Thyroid gland (tissue), 4 donors: ENCODE measurements at regions of chr4 and their contacts with region 1.

Region 1: GRCh38 chr4:25312496-25313200 is at the start of gene ZCCHC4:
- DNase-seq: peak; percentile 91 to 94
- H3K4me3 ChIP-seq: peak within 1 kb of the TSS; percentile 12 to 60 (median 48)
- H3K27ac ChIP-seq: peak within 1 kb of the TSS in 2 of 3 donors; percentile 47 to 50
- H3K4me1 ChIP-seq: peaks cover 5 to 7% of the 10 kb centered on the region in 2 donors
- H3K27me3 ChIP-seq: no peaks in the 10 kb centered on the region
- CTCF ChIP-seq: peak; percentile 80 to 100 (median 96)
- POLR2A ChIP-seq: peak in 1 of 2 donors; percentile 46
- total RNA-seq, gene ZCCHC4: 9.3 to 19.5 (median 13.4) TPM

Region 2: DNA sequence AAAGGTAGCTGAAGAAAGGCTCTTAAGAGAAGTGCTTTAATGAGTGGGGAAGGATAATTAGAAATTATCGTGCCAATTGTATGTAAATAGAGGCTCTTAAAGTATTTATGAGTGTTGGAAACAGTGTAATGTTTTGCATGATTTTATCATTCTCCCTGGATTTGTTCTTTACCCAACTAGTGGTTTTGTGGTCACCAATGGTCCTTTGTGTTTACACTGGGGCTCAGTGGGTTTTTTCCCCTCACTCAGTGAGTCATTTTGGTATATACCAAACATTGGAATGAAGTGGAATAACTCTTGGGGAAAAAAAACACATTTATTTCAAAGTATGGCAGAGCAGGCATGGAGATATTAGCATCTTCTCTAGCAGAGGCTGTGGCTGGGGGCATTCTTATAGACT is 261.1 kb before region 1 on chr4:
- intact Hi-C with region 1: no loop called
- DNase-seq: no peak
- H3K4me3 ChIP-seq: no peak overlapping the region
- H3K27ac ChIP-seq: no peak overlapping the region
- H3K4me1 ChIP-seq: no peaks in the 10 kb centered on the region
- H3K27me3 ChIP-seq: no peaks in the 10 kb centered on the region
- CTCF ChIP-seq: no peak
- POLR2A ChIP-seq: no peak

Region 3: GRCh38 chr4:25234390-25235370 is 78.0 kb before region 1 on chr4:
- intact Hi-C with region 1: loop called (anchors 5 kb)
- DNase-seq: peak; percentile 58 to 62
- H3K4me3 ChIP-seq: peak overlapping the region; percentile 70 to 89 (median 74)
- H3K27ac ChIP-seq: peak overlapping the region; percentile 92 to 98 (median 93)
- H3K4me1 ChIP-seq: peaks cover 14 to 26% of the 10 kb centered on the region in 2 donors
- H3K27me3 ChIP-seq: no peaks in the 10 kb centered on the region
- CTCF ChIP-seq: peak in 5 of 6 experiments; percentile 44 to 64 (median 55)
- POLR2A ChIP-seq: peak in 1 of 2 donors; percentile 61

Region 4: DNA sequence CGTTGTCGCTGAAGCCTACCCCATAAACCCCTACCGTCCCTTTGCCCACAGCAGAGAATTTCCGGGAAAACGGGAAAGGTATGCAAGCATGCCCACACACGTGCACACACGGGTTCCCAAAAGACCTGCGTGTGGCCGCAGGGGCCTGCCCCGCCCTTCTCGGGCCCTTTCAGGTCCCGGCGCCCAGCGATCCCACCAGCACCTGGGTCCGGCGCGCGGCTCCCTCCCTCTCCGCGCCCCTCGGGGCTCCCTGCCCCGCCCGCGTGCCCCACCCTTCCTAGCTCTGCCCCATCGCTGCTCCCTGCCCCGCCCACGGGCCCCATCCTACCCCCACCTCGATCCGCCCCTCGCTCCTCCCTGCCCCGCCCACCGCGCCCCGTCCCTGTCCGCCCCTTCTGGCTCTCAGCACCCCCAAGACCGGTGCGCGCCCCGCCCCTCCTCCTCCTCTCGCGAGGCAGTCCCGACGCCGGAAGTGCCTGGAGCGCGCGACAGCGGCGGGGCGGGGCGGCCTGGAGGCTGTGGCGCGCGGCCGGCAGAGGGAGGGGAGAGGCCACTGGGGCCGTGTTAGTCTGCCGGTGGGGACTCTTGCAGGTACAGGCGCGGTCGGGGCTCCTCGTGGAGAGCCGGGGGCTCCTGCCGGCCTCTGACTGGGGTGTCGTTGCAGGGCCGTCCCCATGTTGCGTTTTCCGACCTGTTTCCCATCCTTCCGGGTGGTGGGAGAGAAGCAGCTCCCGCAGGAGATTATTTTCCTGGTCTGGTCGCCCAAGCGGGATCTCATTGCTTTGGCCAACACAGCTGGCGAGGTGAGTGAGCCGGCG is 64.3 kb after region 1 on chr4 and contains the start of gene ANAPC4:
- intact Hi-C with region 1: loop called (anchors 10 kb)
- DNase-seq: peak; percentile 96
- H3K4me3 ChIP-seq: peak within 1 kb of the TSS; percentile 85 to 96 (median 91)
- H3K27ac ChIP-seq: peak within 1 kb of the TSS; percentile 21 to 69 (median 47)
- H3K4me1 ChIP-seq: peaks cover 7 to 13% of the 10 kb centered on the region in 2 donors
- H3K27me3 ChIP-seq: no peaks in the 10 kb centered on the region
- CTCF ChIP-seq: peak in 3 of 6 experiments; percentile 13 to 28 (median 21)
- POLR2A ChIP-seq: peak in 1 of 2 donors; percentile 77
- total RNA-seq, gene ANAPC4: 30.0 to 68.4 (median 32.6) TPM

Region 5: DNA sequence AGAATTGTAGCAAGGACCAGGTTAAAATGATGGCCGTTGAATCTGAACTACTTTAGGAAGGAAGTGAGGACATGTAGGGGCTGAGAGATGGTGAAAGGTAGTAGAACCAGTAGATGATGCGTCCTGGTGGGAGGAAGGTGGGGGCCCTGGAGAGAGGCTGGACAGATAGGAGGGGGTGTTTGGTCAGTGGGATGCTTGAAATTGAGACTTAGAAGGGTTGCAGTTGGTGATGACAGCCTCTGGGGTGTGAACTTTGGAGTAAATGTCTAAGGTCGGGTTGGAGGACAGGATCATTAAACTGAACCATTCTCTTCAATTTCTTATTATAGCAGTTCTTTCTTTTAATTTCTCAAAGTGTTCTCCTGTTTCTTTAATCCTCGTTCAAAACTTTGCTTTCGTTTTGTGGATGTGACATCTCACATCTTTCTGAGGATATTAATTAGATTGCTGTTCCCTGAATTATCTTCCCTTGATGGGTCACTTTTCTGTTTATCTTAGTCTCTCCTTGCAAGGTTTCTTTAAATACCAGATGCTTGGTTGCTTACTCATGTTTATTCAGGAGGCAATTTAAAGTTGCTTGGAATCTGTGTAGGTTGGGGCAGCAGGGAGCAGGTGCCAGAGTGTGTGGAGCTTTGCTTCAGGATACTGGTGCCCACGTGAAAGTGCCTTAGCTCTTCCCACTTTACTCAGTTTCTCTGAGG is 88.2 kb after region 1 on chr4:
- intact Hi-C with region 1: no loop called
- DNase-seq: no peak
- H3K4me3 ChIP-seq: no peak overlapping the region
- H3K27ac ChIP-seq: no peak overlapping the region
- H3K4me1 ChIP-seq: no peaks in the 10 kb centered on the region
- H3K27me3 ChIP-seq: no peaks in the 10 kb centered on the region
- CTCF ChIP-seq: no peak
- POLR2A ChIP-seq: no peak